ENCODE measurements at regions of chr11 and their contacts with region 1.

Region 1: DNA sequence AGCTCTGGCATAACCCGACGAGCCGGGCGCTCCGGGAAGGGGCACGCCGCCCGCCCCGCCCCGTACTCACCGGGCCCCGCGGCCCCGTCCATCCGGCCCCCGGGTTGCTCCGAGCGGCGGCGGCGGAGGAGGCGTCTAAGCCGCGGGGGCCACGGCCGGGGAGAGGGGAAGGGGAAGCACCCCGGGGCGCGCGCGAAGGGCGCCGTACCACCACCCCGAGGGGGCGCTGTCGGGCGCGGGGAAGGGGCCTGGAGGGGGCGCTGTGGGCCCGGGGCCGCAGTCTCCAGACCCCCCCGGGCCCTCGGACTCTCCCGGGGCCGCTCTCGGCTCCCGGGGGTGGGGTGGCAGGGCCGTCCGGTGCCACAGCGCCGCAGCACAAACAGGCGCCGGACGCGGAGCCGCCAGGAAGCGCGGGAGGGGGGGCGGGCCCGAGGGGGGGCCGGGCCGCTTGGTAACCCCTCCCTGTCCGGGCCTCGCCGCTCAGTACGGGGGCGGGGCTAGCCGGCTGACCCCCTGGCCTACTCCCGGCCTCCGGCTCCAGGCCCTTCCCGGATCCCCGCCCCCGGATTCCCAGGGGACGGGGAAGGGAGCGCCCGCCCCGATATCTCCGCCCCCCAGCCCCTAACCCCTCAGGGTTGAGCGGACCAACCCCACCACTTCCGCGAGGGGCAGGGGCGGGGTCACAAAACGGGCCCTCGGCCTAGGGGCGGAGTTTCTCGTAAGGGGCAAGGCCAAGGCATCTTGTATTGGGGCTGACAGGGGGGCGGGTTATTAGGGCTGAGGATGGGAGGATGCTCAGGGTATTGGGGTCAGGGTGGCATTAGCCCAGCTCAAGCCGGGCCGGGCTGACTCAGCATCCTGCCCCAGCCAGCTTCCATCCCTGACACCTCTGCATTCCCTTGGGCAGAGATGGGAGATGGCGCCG is at the starts of genes EML3 and ROM1:
- DNase-seq: no peak
- H3K4me3 ChIP-seq: peak within 1 kb of the TSS; percentile 65
- H3K27me3 ChIP-seq: no peaks in the 10 kb centered on the region
- CTCF ChIP-seq: peak; percentile 70
- polyA plus RNA-seq, gene EML3: 18.9 and 26.5 TPM in 2 replicates
- polyA plus RNA-seq, gene ROM1: 2.1 and 2.2 TPM in 2 replicates

Region 2: DNA sequence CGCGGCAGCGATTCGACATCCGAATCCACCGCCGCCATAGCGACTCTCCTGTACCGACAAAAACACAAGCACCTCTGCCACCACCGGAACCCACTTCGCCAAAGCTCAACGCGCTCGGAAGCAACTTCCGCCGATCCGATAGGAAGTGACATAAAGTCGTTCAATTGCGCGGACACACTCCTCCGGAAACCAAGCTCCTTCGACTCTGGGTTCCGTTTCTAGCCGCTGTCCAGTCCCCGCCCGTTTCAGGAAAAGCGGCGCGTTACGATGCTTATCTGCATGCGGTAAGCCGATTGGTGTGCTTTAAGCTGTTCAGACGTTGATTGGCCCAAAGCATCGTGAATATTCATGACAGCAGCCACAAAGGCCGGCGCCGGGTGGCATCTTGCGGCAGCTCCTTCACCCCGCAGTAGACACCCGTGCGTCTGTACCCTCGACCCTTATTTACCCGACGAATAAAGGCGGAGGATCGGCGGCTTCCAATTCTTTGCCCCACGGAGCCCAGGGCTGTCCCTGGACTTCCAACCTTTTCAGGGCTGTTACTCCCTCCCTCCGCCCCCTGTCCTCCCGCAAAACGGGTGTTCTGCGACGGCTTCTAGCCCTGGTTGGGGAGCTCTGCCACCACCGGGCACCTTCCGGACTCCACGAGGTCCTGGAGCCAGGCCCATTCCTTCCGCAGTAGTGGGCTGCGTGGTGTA is 21.0 kb before region 1 on chr11 and contains the start of gene TUT1:
- CTCF ChIA-PET with region 1: interaction called, 14 read pairs
- POLR2A ChIA-PET with region 1: no interaction called
- DNase-seq: peak; percentile 96
- H3K4me3 ChIP-seq: peak within 1 kb of the TSS; percentile 51
- H3K27me3 ChIP-seq: no peaks in the 10 kb centered on the region
- CTCF ChIP-seq: no peak
- polyA plus RNA-seq, gene TUT1: 6.4 and 9.9 TPM in 2 replicates

Region 3: DNA sequence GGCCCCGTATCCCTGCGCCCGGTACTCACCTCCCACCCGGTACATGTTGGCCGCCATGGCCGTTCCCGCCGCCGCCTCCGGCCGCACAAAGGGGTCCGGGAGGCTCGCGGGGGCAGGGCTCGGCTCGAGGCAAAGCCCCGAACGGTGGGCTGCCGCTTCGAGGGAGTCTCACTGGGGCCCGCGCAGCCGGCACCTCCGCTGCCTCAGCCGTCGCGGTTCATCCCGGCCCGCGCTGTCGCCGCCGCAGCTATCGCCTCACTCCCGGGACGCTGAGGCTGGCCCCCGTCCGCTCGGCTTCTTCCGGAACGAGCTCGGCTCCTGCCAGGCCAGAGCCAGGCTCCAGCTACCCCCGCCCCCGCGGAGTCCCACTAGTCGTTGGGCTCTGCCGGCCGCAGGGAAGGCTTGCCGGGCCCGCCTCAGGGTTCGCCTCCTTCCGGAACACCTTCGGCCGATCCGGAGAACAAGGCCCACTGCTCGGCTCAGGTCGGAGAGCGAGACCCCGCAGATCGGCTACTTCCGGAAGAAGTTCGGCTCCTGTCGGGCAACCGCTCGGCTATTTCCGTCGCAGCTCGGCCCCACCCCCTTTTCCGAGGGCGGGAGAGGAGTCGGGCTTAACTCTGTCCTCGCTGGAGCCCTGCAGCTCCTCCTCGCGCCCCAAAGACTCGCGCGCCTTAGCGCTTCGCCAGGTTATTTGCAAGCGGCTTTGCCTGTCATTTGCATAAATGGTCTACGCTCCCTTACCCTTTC is 11.1 kb before region 1 on chr11 and contains the start of gene MTA2:
- CTCF ChIA-PET with region 1: interaction called, 12 read pairs
- POLR2A ChIA-PET with region 1: interaction called, 3 read pairs
- DNase-seq: peak; percentile 85
- H3K4me3 ChIP-seq: peak within 1 kb of the TSS; percentile 96
- H3K27me3 ChIP-seq: no peaks in the 10 kb centered on the region
- CTCF ChIP-seq: no peak
- polyA plus RNA-seq, gene MTA2: 16.4 and 17.8 TPM in 2 replicates

Region 4: DNA sequence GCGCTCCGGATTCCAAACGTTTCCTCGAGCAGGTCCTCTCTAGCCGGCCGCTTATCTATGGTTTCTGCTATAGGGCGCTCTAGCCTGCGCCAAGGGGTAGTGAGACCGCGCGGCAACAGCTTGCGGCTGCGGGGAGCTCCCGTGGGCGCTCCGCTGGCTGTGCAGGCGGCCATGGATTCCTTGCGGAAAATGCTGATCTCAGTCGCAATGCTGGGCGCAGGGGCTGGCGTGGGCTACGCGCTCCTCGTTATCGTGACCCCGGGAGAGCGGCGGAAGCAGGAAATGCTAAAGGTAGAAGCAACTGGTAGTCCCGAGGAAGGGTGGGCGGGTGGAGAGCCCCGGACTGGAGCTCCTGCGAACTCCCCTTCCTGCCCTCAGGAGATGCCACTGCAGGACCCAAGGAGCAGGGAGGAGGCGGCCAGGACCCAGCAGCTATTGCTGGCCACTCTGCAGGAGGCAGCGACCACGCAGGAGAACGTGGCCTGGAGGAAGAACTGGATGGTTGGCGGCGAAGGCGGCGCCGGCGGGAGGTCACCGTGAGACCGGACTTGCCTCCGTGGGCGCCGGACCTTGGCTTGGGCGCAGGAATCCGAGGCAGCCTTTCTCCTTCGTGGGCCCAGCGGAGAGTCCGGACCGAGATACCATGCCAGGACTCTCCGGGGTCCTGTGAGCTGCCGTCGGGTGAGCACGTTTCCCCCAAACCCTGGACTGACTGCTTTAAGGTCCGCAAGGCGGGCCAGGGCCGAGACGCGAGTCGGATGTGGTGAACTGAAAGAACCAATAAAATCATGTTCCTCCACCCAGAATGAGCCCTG is 59.2 kb after region 1 on chr11 and contains the starts of genes LBHD1 and UQCC3:
- CTCF ChIA-PET with region 1: no interaction called
- POLR2A ChIA-PET with region 1: no interaction called
- DNase-seq: no peak
- H3K4me3 ChIP-seq: peak within 1 kb of the TSS; percentile 78
- H3K27me3 ChIP-seq: no peaks in the 10 kb centered on the region
- CTCF ChIP-seq: no peak
- polyA plus RNA-seq, gene LBHD1: 4.0 and 4.1 TPM in 2 replicates
- polyA plus RNA-seq, gene UQCC3: 6.9 TPM in 2 replicates